ENCODE measurements at regions of chr6 and their contacts with region 1.

Region 1: DNA sequence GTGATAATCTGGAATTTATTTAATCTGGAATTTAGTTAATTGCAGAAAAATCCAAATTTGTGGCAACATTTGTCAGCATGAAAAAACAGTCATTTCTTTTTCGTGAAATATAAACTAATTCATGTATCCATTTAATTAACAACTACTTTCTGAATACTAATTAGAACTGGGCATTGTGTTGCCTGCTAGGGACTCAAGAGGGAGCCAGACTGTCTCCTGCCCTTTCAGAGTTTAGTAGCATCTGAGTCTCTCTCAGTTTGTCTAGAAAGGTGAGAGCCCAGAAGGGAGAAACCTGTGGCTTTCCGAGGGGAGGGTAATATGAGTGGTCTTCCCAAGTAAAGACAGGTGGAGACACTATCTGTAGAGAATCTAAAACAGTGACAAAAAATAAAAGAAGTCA is 210.9 kb upstream of the HDDC2 start:
- DNase-seq: peak in 2 of 4 experiments; percentile 16 to 26
- ATAC-seq: peak; percentile 85
- H3K4me3 ChIP-seq: no peak overlapping the region
- H3K27ac ChIP-seq: no peak overlapping the region
- H3K4me1 ChIP-seq: no peaks in the 10 kb centered on the region
- H3K27me3 ChIP-seq: no peaks in the 10 kb centered on the region
- CTCF ChIP-seq: peak; percentile 42 to 61 (median 45); a peak in 3 of 6 replicates
- EP300 ChIP-seq: no peak
- POLR2A ChIP-seq: no peak
- RAD21 ChIP-seq: peak; percentile 63 to 65

Region 2: DNA sequence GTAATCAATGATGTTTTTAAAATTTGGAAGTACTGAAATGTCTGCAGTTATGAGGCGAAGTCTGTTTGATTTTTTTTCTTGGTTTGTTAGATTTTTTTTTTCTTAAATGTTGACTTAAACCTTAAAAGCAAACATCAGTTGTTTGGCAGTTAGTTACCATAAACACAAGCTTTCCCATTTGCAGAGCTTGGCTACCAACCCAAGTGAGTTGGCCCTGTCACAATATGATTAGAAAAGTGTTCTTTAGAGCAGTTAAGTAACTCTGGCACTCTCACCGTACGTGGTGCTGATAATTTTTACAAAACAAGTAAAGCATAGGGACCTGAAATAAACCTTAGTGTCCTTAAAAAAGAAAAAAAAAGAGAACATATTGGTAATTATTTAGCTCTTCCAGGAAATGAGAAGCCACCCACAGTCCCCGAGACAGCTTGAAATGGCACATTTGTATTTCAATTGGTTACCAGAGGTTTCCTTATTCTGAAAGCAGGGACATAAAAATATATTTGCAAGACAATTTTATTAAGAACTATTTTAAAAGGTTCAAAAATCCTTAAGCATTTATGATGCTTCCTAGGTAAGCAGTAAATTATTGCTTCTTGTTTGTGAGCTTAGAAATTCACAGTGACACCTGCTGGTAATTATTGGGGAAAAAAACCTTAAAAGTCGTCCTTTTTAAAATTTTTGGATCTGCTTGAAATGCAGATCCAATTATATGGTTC is 240.8 kb after region 1 on chr6:
- CTCF ChIA-PET with region 1: interaction called, 3 read pairs
- POLR2A ChIA-PET with region 1: interaction called, 3 read pairs
- in situ Hi-C with region 1: no loop called
- intact Hi-C with region 1: loop called (anchors 1 kb)
- DNase-seq: peak in 1 of 4 experiments; percentile 36
- ATAC-seq: no peak
- H3K4me3 ChIP-seq: no peak overlapping the region
- H3K27ac ChIP-seq: no peak overlapping the region
- H3K4me1 ChIP-seq: peaks cover 9 to 17% of the 10 kb centered on the region in 2 experiments; a peak in 4 of 5 replicates
- H3K27me3 ChIP-seq: peaks cover 16 to 27% of the 10 kb centered on the region in 2 experiments
- CTCF ChIP-seq: peak in 1 of 3 experiments; percentile 61; a peak in 2 of 6 replicates
- EP300 ChIP-seq: no peak
- POLR2A ChIP-seq: no peak
- RAD21 ChIP-seq: peak; percentile 58 to 69

Measured in K562 (cell line).